Breast epithelium (tissue), 4 donors: ENCODE measurements at regions of chr19 and their contacts with region 1.

Region 1: GRCh38 chr19:39692166-39692565 is 12.1 kb upstream of the LGALS14 start:
- DNase-seq: no peak
- H3K4me3 ChIP-seq: no peak overlapping the region
- H3K27ac ChIP-seq: no peak overlapping the region
- H3K4me1 ChIP-seq: no peaks in the 10 kb centered on the region
- H3K27me3 ChIP-seq: peaks cover 0 to 4% of the 10 kb centered on the region in 2 donors
- CTCF ChIP-seq: no peak
- POLR2A ChIP-seq: no peak

Region 2: GRCh38 chr19:39187559-39187957 is 504.6 kb before region 1 on chr19:
- intact Hi-C with region 1: loop called (anchors 5 kb)
- DNase-seq: no peak
- H3K4me3 ChIP-seq: no peak overlapping the region
- H3K27ac ChIP-seq: no peak overlapping the region
- H3K4me1 ChIP-seq: no peaks in the 10 kb centered on the region
- H3K27me3 ChIP-seq: no peaks in the 10 kb centered on the region
- CTCF ChIP-seq: no peak
- POLR2A ChIP-seq: no peak